Calu3 (cell line): ENCODE measurements at regions of chr5 and their contacts with region 1.

Region 1: GRCh38 chr5:71482132-71482531 is 26.7 kb downstream of the BDP1 start:
- DNase-seq: peak; percentile 40
- H3K4me3 Mint-ChIP-seq: no peak overlapping the region
- H3K27ac Mint-ChIP-seq: peak overlapping the region; percentile 13
- H3K4me1 Mint-ChIP-seq: peaks cover 30% of the 10 kb centered on the region
- H3K27me3 Mint-ChIP-seq: no peaks in the 10 kb centered on the region
- CTCF ChIP-seq: no peak

Region 2: DNA sequence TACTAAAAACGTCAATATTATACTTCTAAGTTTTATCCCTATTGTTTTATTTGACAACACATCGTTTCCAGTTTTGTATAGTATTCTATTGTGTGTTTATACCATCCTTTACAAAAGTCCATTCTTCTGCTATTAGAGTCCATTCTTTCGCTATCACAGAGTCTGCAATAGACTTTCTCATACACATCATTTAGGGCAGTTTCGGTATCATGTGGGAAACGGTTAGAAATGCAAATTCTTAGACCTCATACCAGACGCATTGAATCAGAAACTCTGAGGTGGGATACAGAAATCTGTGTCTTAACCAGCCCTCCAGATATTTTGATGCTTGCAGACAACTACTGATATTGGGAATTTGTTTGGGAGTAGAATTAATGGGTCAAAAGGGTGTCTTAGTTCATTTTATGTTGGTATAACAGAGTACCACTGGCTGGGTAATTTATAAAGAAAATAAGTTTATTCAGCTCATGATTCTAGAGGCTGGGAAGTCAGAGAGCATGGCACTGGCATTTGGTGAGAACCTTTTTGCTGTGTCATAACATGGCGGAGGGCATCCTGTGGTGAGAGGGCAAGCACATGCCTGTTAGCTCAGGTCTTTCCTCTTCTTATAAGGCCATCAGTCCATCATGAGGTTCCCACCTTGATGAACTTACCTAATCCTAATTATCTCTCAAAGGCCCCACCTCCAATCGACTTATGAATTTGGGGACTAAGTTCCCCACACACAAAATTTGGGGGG is 258.1 kb after region 1 on chr5:
- CTCF ChIA-PET with region 1: no interaction called
- intact Hi-C with region 1: no loop called
- DNase-seq: no peak
- H3K4me3 Mint-ChIP-seq: no peak overlapping the region
- H3K27ac Mint-ChIP-seq: no peak overlapping the region
- H3K4me1 Mint-ChIP-seq: peaks cover 47% of the 10 kb centered on the region
- H3K27me3 Mint-ChIP-seq: no peaks in the 10 kb centered on the region
- CTCF ChIP-seq: no peak

Region 3: DNA sequence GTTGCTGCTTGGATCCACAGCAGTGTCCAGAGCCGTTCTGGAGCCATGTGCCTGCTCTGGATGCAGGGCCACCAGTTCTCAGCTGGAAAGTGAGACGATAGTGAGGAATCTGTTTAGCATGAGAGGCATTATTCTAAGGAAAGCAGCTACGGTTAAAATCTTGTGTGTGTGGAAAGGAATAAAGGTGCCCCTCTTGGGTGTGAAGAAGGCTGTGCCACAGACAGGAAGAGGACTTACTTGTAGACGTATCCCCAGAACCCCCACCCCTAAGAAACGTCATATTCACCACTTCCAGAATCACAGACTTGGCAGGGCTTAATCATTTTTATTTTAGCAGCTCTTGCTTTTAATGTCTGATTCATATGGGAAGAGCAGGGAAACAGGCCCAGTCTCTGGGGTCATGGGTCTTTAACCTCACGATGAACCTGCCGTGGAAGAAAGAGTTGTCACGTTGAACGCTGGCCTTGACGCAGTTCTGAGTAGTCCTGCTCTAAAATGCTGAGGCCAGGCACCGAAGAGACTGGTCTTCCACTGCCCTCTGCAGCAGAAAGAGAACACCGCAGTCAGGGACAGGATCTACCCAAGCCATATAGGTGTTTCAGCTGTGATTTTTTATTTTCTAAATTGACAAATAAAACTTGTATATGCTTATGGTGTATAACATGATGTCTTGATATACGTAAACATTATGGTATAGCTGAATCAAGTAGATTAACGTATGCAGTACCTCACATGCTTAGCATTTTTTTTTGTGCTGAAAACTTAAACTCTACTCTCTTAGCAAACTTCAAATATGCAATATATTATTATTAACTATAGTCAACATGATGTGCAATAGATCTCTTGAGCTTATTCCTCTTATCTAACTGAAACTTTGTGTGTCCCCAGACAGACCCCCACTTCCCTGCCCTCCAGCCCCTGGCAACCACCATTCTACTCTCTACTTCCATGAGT is 275.7 kb after region 1 on chr5:
- CTCF ChIA-PET with region 1: no interaction called
- intact Hi-C with region 1: loop called (anchors 5 kb)
- DNase-seq: peak; percentile 75
- H3K4me3 Mint-ChIP-seq: no peak overlapping the region
- H3K27ac Mint-ChIP-seq: peak overlapping the region; percentile 43
- H3K4me1 Mint-ChIP-seq: peaks cover 12% of the 10 kb centered on the region
- H3K27me3 Mint-ChIP-seq: no peaks in the 10 kb centered on the region
- CTCF ChIP-seq: peak; percentile 77